ENCODE measurements at regions of chr22 and their contacts with region 1.

Region 1: DNA sequence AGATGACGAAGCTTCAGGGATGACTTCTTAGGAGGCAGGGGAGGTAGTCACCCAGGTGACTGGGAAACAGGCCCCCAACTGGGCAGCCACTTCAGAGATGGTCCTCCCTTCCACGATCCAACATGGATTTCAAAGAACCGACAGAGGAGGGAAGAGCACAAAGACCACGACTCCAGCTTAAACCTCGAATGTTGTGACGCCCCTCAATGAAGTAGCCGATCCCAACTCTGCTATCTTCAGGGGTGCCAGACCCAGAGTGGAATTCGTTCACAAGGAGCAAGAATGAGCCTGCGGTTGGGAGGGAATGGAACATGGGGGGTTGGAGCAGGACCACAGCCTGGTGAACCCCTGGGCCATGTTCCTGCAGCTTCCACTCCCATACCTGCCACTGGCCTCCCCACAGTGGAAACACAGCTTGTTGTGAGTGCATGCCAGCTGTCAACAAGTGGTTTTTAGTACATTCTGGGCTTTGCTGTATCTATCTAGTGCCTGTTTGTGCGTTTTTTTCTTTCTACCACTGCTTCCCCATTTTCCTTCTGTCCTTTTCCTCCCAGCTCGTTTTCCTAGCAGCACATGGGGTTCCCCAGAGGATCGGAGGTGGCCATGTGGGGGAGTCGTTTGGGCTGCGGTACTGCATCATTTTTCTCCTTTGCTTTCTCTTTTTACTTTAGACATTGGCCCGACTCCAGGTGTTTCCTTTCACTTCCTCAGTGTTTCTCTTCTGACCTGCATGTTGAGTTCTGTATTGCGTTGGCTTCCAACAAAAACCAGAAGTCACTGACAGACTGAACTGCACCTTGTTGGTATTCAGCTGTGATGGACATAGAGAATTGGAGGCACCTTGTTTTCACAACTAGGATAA is 65.8 kb downstream of the MORC2 start:
- DNase-seq: no peak
- ATAC-seq: no peak
- H3K4me3 ChIP-seq: no peak overlapping the region
- H3K27ac ChIP-seq: no peak overlapping the region
- H3K4me1 ChIP-seq: no peaks in the 10 kb centered on the region
- H3K27me3 ChIP-seq: no peaks in the 10 kb centered on the region
- CTCF ChIP-seq: no peak
- POLR2A ChIP-seq: no peak
- RAD21 ChIP-seq: no peak

Region 2: GRCh38 chr22:30609260-30610185 is 293.2 kb before region 1 on chr22:
- CTCF ChIA-PET with region 1: no interaction called
- POLR2A ChIA-PET with region 1: no interaction called
- dilution Hi-C with region 1: no loop called
- in situ Hi-C with region 1: loop called (anchors 10 kb)
- intact Hi-C with region 1: no loop called
- DNase-seq: peak; percentile 86
- ATAC-seq: peak; percentile 81
- H3K4me3 ChIP-seq: no peak overlapping the region
- H3K27ac ChIP-seq: peak overlapping the region; percentile 37; the same call in 1 of the 2 replicates
- H3K4me1 ChIP-seq: peaks cover 14% of the 10 kb centered on the region
- H3K27me3 ChIP-seq: no peaks in the 10 kb centered on the region
- CTCF ChIP-seq: no peak
- POLR2A ChIP-seq: no peak
- RAD21 ChIP-seq: no peak

Region 3: DNA sequence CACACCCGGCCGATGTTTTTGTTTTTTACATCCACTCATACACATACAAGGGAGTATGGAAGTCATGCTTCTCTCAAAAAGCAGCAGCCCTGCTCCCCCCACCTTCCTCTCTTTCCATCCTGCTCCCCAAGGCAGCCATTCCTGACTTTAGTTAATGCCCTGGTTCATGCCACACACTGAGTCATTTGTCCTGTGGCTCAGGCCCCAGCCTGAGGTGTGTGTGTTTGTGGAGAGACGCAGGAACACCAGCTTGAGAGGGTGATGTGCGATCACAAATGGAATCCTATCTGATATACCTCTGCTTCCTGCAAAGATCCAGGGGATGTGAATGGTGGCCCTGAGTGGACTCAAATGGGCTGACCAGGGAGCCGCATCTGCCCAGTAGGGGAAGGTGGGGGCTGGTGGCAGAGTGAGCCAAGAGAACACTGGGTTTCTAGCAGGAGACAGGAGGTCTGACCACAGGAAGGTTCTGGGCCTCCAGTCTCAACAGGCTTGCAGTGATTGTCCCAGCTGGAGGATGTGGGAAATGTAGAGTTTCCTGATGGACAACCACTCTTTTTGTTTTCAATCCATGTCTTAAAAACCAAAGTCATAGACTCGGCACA is 121.4 kb before region 1 on chr22:
- CTCF ChIA-PET with region 1: no interaction called
- POLR2A ChIA-PET with region 1: no interaction called
- dilution Hi-C with region 1: no loop called
- in situ Hi-C with region 1: loop called (anchors 10 kb)
- intact Hi-C with region 1: no loop called
- DNase-seq: peak; percentile 16
- ATAC-seq: no peak
- H3K4me3 ChIP-seq: no peak overlapping the region
- H3K27ac ChIP-seq: no peak overlapping the region
- H3K4me1 ChIP-seq: peaks cover 10% of the 10 kb centered on the region
- H3K27me3 ChIP-seq: no peaks in the 10 kb centered on the region; the same call in 1 of the 2 replicates
- CTCF ChIP-seq: no peak
- POLR2A ChIP-seq: no peak
- RAD21 ChIP-seq: no peak

Region 4: GRCh38 chr22:31148953-31149627 is 246.4 kb after region 1 on chr22:
- CTCF ChIA-PET with region 1: no interaction called
- POLR2A ChIA-PET with region 1: no interaction called
- dilution Hi-C with region 1: no loop called
- in situ Hi-C with region 1: no loop called
- intact Hi-C with region 1: no loop called
- DNase-seq: peak; percentile 80
- ATAC-seq: peak; percentile 99
- H3K4me3 ChIP-seq: no peak overlapping the region
- H3K27ac ChIP-seq: peak overlapping the region; percentile 9; the same call in 1 of the 2 replicates
- H3K4me1 ChIP-seq: peaks cover 5% of the 10 kb centered on the region
- H3K27me3 ChIP-seq: no peaks in the 10 kb centered on the region
- CTCF ChIP-seq: peak; percentile 98
- POLR2A ChIP-seq: no peak
- RAD21 ChIP-seq: peak; percentile 97